PC-3 (cell line): ENCODE measurements at regions of chr2 and their contacts with region 1.

Region 1: GRCh38 chr2:144553379-144553778 is 33.5 kb upstream of the ZEB2 start:
- DNase-seq: peak; percentile 92
- ATAC-seq: peak; percentile 88
- H3K4me3 ChIP-seq: no peak overlapping the region
- H3K27ac ChIP-seq: peak overlapping the region; percentile 44
- H3K4me1 ChIP-seq: peaks cover 28% of the 10 kb centered on the region
- H3K27me3 ChIP-seq: no peaks in the 10 kb centered on the region
- CTCF ChIP-seq: no peak

Region 2: GRCh38 chr2:144438801-144439631 is 114.4 kb before region 1 on chr2:
- CTCF ChIA-PET with region 1: no interaction called
- POLR2A ChIA-PET with region 1: interaction called, 13 read pairs
- intact Hi-C with region 1: no loop called
- DNase-seq: no peak
- ATAC-seq: no peak
- H3K4me3 ChIP-seq: no peak overlapping the region
- H3K27ac ChIP-seq: no peak overlapping the region
- H3K4me1 ChIP-seq: peaks cover 21% of the 10 kb centered on the region
- H3K27me3 ChIP-seq: no peaks in the 10 kb centered on the region
- CTCF ChIP-seq: no peak

Region 3: DNA sequence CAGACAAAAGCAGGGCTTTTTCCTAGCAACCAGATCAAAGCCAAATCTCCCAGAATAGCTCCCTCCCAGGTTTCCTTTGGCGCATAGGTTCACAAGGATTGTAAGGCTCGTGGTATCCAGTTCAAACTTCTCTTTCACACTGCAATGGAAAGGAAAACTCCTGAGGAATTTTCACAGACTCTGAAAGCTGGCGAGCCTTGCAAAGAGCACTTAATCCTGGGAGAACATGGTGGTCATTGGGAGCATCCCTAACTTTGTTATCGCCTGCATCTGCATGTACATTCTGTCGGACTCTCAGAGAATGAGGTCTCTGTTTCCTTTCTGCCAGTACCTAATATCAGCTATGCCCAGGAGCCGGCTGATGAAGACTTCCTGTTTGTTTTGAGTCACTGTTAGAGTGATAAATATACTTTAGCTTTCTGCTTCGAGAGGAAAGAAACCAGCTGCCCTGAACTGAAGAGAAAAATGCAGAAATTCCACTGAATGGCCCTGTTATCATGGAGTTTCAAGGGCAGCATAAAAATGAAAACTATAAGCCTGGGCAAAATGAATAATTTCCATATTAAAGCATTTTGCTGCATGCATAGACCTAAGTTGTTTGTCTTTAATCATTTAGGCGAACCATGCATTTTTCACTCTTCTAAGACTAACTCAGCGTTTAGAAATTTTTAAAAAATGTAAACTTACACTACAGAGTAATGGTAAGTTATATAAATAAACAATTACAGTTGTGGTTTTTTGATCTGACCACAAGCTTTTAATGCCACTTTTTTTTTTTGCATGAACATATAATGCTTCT is 42.9 kb after region 1 on chr2:
- CTCF ChIA-PET with region 1: no interaction called
- POLR2A ChIA-PET with region 1: no interaction called
- intact Hi-C with region 1: loop called (anchors 1 kb)
- DNase-seq: peak; percentile 83
- ATAC-seq: peak; percentile 97
- H3K4me3 ChIP-seq: peak overlapping the region; percentile 29; the same call in 1 of the 2 replicates
- H3K27ac ChIP-seq: peak overlapping the region; percentile 73
- H3K4me1 ChIP-seq: peaks cover 19% of the 10 kb centered on the region
- H3K27me3 ChIP-seq: no peaks in the 10 kb centered on the region
- CTCF ChIP-seq: no peak

Region 4: GRCh38 chr2:144607891-144608521 is 54.6 kb after region 1 on chr2:
- CTCF ChIA-PET with region 1: no interaction called
- POLR2A ChIA-PET with region 1: no interaction called
- intact Hi-C with region 1: no loop called
- DNase-seq: no peak
- ATAC-seq: no peak
- H3K4me3 ChIP-seq: no peak overlapping the region
- H3K27ac ChIP-seq: no peak overlapping the region
- H3K4me1 ChIP-seq: peaks cover 4% of the 10 kb centered on the region; the same call in 1 of the 2 replicates
- H3K27me3 ChIP-seq: no peaks in the 10 kb centered on the region
- CTCF ChIP-seq: no peak

Region 5: GRCh38 chr2:144645083-144645778 is 91.9 kb after region 1 on chr2:
- CTCF ChIA-PET with region 1: no interaction called
- POLR2A ChIA-PET with region 1: no interaction called
- intact Hi-C with region 1: loop called (anchors 10 kb)
- DNase-seq: no peak
- ATAC-seq: no peak
- H3K4me3 ChIP-seq: no peak overlapping the region
- H3K27ac ChIP-seq: no peak overlapping the region
- H3K4me1 ChIP-seq: peaks cover 15% of the 10 kb centered on the region
- H3K27me3 ChIP-seq: no peaks in the 10 kb centered on the region
- CTCF ChIP-seq: no peak